ENCODE measurements at regions of chr1 and their contacts with region 1.

Region 1: GRCh38 chr1:178501705-178502329 is 5.1 kb upstream of the CLEC20A start:
- DNase-seq: peak; percentile 75 to 86
- H3K4me3 ChIP-seq: no peak overlapping the region
- H3K4me3 Mint-ChIP-seq: no peak overlapping the region
- H3K27ac Mint-ChIP-seq: no peak overlapping the region
- H3K4me1 ChIP-seq: peaks cover 8% of the 10 kb centered on the region
- H3K4me1 Mint-ChIP-seq: peaks cover 9% of the 10 kb centered on the region
- H3K27me3 ChIP-seq: no peaks in the 10 kb centered on the region
- H3K27me3 Mint-ChIP-seq: no peaks in the 10 kb centered on the region
- CTCF ChIP-seq: peak; percentile 88 to 95

Region 2: DNA sequence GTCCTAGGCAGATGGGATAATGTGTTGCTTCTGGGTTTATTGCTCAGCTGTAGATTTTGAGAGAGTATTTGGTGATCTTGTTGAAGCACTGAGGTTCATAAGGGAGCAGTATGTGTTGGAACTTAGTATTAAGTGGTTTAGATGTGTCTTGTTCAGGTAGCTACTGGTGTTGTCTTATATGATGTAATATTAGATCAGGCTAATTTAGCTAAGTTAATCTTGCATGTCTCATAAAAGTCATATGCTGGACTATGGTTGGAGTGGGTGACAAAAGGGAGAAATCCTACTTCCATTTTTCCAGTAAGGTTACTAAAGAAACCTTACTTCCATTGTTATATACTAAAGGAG is 201.5 kb before region 1 on chr1:
- CTCF ChIA-PET with region 1: interaction called, 4 read pairs
- POLR2A ChIA-PET with region 1: no interaction called
- intact Hi-C with region 1: loop called (anchors 2 kb)
- DNase-seq: no peak
- H3K4me3 ChIP-seq: no peak overlapping the region
- H3K4me3 Mint-ChIP-seq: no peak overlapping the region
- H3K27ac Mint-ChIP-seq: no peak overlapping the region
- H3K4me1 ChIP-seq: no peaks in the 10 kb centered on the region
- H3K4me1 Mint-ChIP-seq: peaks cover 15% of the 10 kb centered on the region
- H3K27me3 ChIP-seq: no peaks in the 10 kb centered on the region
- H3K27me3 Mint-ChIP-seq: no peaks in the 10 kb centered on the region
- CTCF ChIP-seq: no peak

Region 3: DNA sequence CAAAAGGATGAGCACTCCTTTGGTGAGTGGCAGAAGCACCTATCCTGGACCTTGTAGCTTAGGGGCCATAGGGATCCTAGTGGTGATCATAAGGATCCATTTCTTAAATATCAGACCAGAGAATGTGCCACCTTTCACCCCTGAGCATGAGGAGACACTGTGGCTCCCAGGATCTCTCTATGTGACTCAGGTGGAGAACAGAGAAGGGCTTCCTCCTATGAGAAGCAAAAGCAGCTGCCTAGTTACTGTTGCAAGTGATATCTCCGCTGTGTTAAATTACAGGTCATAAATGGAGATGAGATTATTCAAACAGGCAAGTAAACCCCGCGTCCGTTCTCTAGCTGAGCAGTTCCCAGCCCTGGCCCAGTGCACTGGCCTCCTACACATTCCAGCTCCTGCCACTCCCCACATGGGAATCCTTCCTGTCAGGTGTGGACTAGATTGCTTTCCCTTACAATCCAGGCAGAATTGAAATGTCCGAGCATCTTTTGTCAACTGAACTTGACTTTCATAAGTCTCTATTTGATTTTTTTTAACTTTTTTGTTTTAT is 31.3 kb before region 1 on chr1:
- CTCF ChIA-PET with region 1: interaction called, 4 read pairs
- POLR2A ChIA-PET with region 1: no interaction called
- intact Hi-C with region 1: loop called (anchors 2 kb)
- DNase-seq: peak; percentile 84 to 92
- H3K4me3 ChIP-seq: no peak overlapping the region
- H3K4me3 Mint-ChIP-seq: peak overlapping the region; percentile 18
- H3K27ac Mint-ChIP-seq: peak overlapping the region; percentile 86
- H3K4me1 ChIP-seq: peaks cover 26% of the 10 kb centered on the region
- H3K4me1 Mint-ChIP-seq: peaks cover 5% of the 10 kb centered on the region
- H3K27me3 ChIP-seq: no peaks in the 10 kb centered on the region
- H3K27me3 Mint-ChIP-seq: no peaks in the 10 kb centered on the region
- CTCF ChIP-seq: no peak

Region 4: GRCh38 chr1:178552856-178553255 is 51.0 kb after region 1 on chr1:
- CTCF ChIA-PET with region 1: no interaction called
- POLR2A ChIA-PET with region 1: no interaction called
- intact Hi-C with region 1: no loop called
- DNase-seq: no peak
- H3K4me3 ChIP-seq: no peak overlapping the region
- H3K4me3 Mint-ChIP-seq: no peak overlapping the region
- H3K27ac Mint-ChIP-seq: no peak overlapping the region
- H3K4me1 ChIP-seq: no peaks in the 10 kb centered on the region
- H3K4me1 Mint-ChIP-seq: no peaks in the 10 kb centered on the region
- H3K27me3 ChIP-seq: no peaks in the 10 kb centered on the region
- H3K27me3 Mint-ChIP-seq: no peaks in the 10 kb centered on the region
- CTCF ChIP-seq: no peak

Region 5: DNA sequence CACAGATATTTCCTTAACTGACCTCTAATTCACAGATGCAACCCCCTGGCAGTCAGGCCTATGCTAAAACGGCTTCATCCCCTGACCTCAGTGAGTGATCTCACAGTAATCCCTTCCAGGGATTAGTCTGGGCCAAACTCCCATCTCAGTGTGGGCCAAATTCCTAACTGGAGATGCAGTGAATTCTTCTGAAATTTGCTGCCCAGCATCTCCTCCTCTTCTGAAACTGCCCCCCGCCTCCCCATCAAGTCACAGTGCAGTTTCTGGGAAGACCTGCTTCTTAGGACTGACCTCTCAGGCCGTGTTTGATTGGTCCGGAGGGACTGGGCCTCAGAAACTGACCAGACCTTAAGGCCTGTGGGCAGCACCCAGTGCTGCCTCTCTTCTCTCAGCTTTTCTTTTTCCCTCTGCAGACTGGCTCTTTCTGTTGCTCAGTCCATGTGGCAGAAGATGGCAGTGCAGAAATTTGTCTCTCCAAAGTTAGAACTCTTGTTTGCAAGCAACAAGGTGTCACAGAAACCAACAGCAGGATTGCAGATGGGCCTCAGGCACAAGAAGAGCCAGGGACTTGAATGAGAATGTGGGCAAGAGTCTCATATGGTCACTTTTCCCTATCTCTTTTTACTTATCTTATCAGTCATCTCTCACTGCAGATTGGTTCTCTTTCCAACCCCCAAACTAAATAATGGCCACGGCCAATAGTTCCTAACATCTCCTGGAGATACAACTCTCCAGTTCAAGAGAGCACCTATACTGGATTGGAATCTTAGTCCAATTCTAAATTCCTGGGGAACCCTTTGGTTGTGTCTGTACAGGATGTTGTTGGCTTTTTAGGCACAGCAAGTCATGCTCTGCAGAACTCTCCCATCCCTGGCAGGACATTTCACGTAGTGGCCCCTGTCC is 127.7 kb after region 1 on chr1:
- CTCF ChIA-PET with region 1: no interaction called
- POLR2A ChIA-PET with region 1: no interaction called
- intact Hi-C with region 1: no loop called
- DNase-seq: no peak
- H3K4me3 ChIP-seq: no peak overlapping the region
- H3K4me3 Mint-ChIP-seq: no peak overlapping the region
- H3K27ac Mint-ChIP-seq: peak overlapping the region; percentile 37
- H3K4me1 ChIP-seq: peaks cover 25% of the 10 kb centered on the region
- H3K4me1 Mint-ChIP-seq: peaks cover 19% of the 10 kb centered on the region
- H3K27me3 ChIP-seq: no peaks in the 10 kb centered on the region
- H3K27me3 Mint-ChIP-seq: no peaks in the 10 kb centered on the region
- CTCF ChIP-seq: no peak

Measured in Caco-2 (cell line).